WTC11 (cell line): ENCODE measurements at regions of chr2 and their contacts with region 1.

Region 1: GRCh38 chr2:133517876-133518275 is 50.4 kb downstream of the NCKAP5 start:
- DNase-seq: no peak
- ATAC-seq: no peak
- H3K4me3 Mint-ChIP-seq: no peak overlapping the region
- H3K27ac Mint-ChIP-seq: no peak overlapping the region
- H3K4me1 Mint-ChIP-seq: peaks cover under 1% of the 10 kb centered on the region
- H3K27me3 Mint-ChIP-seq: peaks cover 33% of the 10 kb centered on the region
- CTCF ChIP-seq: no peak

Region 2: DNA sequence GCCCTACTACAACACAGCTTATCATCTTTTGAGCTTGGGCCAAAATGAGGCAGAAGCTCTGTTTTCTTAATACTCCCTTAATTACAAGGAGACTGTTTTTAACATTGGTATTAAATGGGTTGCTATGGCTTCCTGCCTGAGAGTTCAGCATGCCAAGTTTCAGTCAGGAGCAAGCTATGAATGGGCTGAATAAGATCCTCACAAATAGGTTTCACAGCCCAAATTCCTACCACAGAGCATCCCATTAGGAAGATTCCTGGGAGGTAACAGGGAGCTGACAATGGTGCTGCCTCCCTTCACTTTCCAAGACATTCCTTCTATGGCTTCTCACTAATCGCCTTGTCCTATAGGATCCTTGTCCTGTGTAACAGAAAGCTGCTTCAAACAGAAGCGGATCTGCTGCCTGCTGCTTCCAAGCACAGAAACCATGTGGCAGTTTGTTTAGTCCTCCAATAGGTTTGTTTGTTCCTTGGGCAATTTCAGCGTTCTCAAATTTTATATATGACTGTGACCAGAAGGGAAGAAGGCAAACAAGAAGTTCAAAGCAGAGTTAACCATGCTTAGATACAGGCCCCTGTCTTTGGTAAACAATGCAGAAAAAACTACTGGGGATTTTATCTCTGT is 20.5 kb before region 1 on chr2:
- CTCF ChIA-PET with region 1: interaction called, 16 read pairs
- POLR2A ChIA-PET with region 1: no interaction called
- DNase-seq: no peak
- ATAC-seq: peak; percentile 91
- H3K4me3 Mint-ChIP-seq: no peak overlapping the region
- H3K27ac Mint-ChIP-seq: no peak overlapping the region
- H3K4me1 Mint-ChIP-seq: peaks cover 34% of the 10 kb centered on the region
- H3K27me3 Mint-ChIP-seq: no peaks in the 10 kb centered on the region
- CTCF ChIP-seq: no peak

Region 3: GRCh38 chr2:133561045-133561852 is 43.4 kb after region 1 on chr2:
- CTCF ChIA-PET with region 1: interaction called, 48 read pairs
- POLR2A ChIA-PET with region 1: no interaction called
- DNase-seq: no peak
- ATAC-seq: peak; percentile 50; the same call in 1 of the 2 replicates
- H3K4me3 Mint-ChIP-seq: no peak overlapping the region
- H3K27ac Mint-ChIP-seq: no peak overlapping the region
- H3K4me1 Mint-ChIP-seq: no peaks in the 10 kb centered on the region
- H3K27me3 Mint-ChIP-seq: no peaks in the 10 kb centered on the region; the same call in 1 of the 2 replicates
- CTCF ChIP-seq: 0 out of 2 replicates have a peak, but pooled peaks have one; percentile 23

Region 4: DNA sequence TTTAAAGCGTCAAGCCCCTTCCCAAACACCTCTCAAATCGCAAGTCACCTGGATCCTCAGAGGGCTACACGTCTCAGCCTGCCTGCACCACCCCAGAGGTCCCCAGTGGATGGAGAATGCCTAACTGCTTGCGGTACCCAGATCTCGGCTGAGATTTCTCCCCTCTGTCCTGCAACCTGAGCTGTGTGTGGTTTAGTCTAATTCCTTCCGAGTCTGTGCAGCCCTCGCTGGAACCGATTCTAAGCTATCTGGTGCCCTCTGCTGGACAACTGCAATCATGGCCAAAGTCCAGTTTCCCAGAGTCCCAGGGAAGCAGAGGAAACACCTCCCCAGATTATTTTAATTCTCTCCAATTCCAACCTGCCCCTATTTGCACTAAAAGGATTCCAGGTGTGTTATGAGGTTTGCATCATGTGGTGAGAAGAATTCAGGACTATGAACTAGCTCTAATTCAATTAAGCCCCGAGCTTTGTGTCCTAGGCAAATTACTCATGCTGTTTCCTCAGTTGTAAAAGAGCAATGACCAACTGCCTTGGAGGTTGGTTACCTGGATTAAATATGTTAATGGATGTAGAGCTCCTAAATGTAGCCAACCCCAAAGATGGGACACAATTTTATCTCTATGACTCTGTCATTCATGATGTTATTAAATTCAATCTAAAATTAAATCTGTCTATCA is 326.5 kb after region 1 on chr2:
- CTCF ChIA-PET with region 1: interaction called, 25 read pairs
- POLR2A ChIA-PET with region 1: no interaction called
- DNase-seq: peak; percentile 72
- ATAC-seq: peak; percentile 95
- H3K4me3 Mint-ChIP-seq: no peak overlapping the region
- H3K27ac Mint-ChIP-seq: no peak overlapping the region
- H3K4me1 Mint-ChIP-seq: peaks cover 8% of the 10 kb centered on the region
- H3K27me3 Mint-ChIP-seq: no peaks in the 10 kb centered on the region; the same call in 1 of the 2 replicates
- CTCF ChIP-seq: peak; percentile 67